ENCODE measurements at regions of chr15 and their contacts with region 1.

Region 1: GRCh38 chr15:89352476-89352875 is 17.9 kb upstream of the POLG start:
- DNase-seq: no peak
- ATAC-seq: no peak
- H3K4me3 ChIP-seq: no peak overlapping the region
- H3K27ac ChIP-seq: no peak overlapping the region
- H3K4me1 ChIP-seq: no peaks in the 10 kb centered on the region
- H3K27me3 ChIP-seq: peaks cover 34 to 41% (median 41%) of the 10 kb centered on the region in 3 donors
- CTCF ChIP-seq: no peak
- POLR2A ChIP-seq: no peak

Region 2: DNA sequence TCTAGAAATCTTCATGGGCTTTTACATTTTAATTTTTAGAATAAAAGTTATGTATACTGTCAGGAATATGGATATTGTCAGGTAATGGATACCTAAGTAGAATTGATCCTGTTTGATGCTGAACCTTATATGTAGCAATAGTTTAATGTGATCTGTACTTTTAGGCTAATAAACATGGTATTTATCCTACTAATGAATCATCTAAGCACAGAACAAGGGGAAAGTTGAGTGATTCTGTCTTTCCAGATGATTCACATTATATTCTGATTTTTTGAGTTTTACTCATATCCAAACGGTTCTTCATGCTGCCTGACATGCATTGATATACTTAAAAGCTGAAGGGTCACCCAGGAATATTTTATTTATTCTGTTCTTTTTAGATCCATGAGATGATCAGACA is 74.2 kb before region 1 on chr15:
- in situ Hi-C with region 1: no loop called
- intact Hi-C with region 1: no loop called
- DNase-seq: no peak
- ATAC-seq: no peak
- H3K4me3 ChIP-seq: no peak overlapping the region
- H3K27ac ChIP-seq: no peak overlapping the region
- H3K4me1 ChIP-seq: no peaks in the 10 kb centered on the region
- H3K27me3 ChIP-seq: no peaks in the 10 kb centered on the region
- CTCF ChIP-seq: no peak
- POLR2A ChIP-seq: no peak

Region 3: GRCh38 chr15:89436570-89437316 is 84.3 kb after region 1 on chr15:
- in situ Hi-C with region 1: loop called in 2 of 4 experiments (anchors 5 to 10 kb)
- intact Hi-C with region 1: no loop called
- DNase-seq: no peak
- ATAC-seq: no peak
- H3K4me3 ChIP-seq: no peak overlapping the region
- H3K27ac ChIP-seq: no peak overlapping the region
- H3K4me1 ChIP-seq: no peaks in the 10 kb centered on the region
- H3K27me3 ChIP-seq: peaks cover 0 to 9% (median 0%) of the 10 kb centered on the region in 3 donors
- CTCF ChIP-seq: no peak
- POLR2A ChIP-seq: no peak

Region 4: GRCh38 chr15:89502867-89503595 is 150.6 kb after region 1 on chr15:
- in situ Hi-C with region 1: no loop called
- intact Hi-C with region 1: no loop called
- DNase-seq: no peak
- ATAC-seq: no peak
- H3K4me3 ChIP-seq: no peak overlapping the region
- H3K27ac ChIP-seq: no peak overlapping the region
- H3K4me1 ChIP-seq: no peaks in the 10 kb centered on the region
- H3K27me3 ChIP-seq: peaks cover 0 to 9% (median 6%) of the 10 kb centered on the region in 3 donors
- CTCF ChIP-seq: no peak
- POLR2A ChIP-seq: no peak

Region 5: DNA sequence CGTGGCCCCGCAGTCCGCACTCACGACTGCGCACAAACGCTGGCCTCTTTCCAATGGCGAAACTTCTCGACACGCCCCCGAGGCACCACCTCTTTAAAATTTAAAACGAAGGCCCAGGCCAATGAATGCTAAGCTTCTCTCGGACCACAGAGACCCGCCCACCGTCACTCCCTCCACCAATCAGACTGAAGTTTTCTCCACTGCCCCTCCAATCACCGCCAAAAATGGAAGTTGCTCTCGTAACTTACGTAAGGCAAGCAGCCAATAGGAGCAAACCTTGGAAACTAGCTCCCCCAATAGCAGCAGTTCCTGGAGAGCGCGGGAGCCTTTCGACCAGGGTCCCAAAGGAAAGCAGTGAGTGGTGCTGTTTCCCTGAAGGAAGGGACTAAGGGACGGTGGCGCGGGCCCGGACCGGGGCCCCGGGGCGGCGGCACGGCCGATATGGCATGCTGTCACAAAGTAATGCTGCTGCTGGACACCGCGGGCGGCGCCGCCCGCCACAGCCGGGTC is 222.7 kb after region 1 on chr15 and contains the start of gene TICRR:
- in situ Hi-C with region 1: no loop called
- intact Hi-C with region 1: no loop called
- DNase-seq: peak; percentile 94 to 97
- ATAC-seq: peak; percentile 100
- H3K4me3 ChIP-seq: peak within 1 kb of the TSS; percentile 64 to 75 (median 68)
- H3K27ac ChIP-seq: peak within 1 kb of the TSS in 1 of 4 donors; percentile 13
- H3K4me1 ChIP-seq: peaks cover 6 to 8% of the 10 kb centered on the region in 2 donors
- H3K27me3 ChIP-seq: no peaks in the 10 kb centered on the region
- CTCF ChIP-seq: no peak
- POLR2A ChIP-seq: no peak
- total RNA-seq, gene TICRR: not detected